Colonic mucosa (tissue), 4 donors: ENCODE measurements at regions of chr1 and their contacts with region 1.

Region 1: GRCh38 chr1:183471743-183472487 is 384 bp upstream of the SMG7 start:
- DNase-seq: peak; percentile 99
- H3K4me3 ChIP-seq: peak overlapping the region; percentile 96
- H3K27ac ChIP-seq: peak overlapping the region; percentile 95
- H3K4me1 ChIP-seq: peaks cover 5% of the 10 kb centered on the region
- H3K27me3 ChIP-seq: no peaks in the 10 kb centered on the region
- CTCF ChIP-seq: no peak

Region 2: GRCh38 chr1:183543619-183544204 is 71.8 kb after region 1 on chr1:
- intact Hi-C with region 1: loop called (anchors 5 kb)
- DNase-seq: peak; percentile 27
- H3K4me3 ChIP-seq: no peak overlapping the region
- H3K27ac ChIP-seq: no peak overlapping the region
- H3K4me1 ChIP-seq: no peaks in the 10 kb centered on the region
- H3K27me3 ChIP-seq: no peaks in the 10 kb centered on the region
- CTCF ChIP-seq: peak; percentile 52

Region 3: GRCh38 chr1:183622884-183623785 is 151.2 kb after region 1 on chr1:
- intact Hi-C with region 1: loop called (anchors 5 kb)
- DNase-seq: peak; percentile 62
- H3K4me3 ChIP-seq: no peak overlapping the region
- H3K27ac ChIP-seq: no peak overlapping the region
- H3K4me1 ChIP-seq: no peaks in the 10 kb centered on the region
- H3K27me3 ChIP-seq: no peaks in the 10 kb centered on the region
- CTCF ChIP-seq: peak; percentile 69